A549 (cell line): ENCODE measurements at regions of chr20 and their contacts with region 1.

Region 1: DNA sequence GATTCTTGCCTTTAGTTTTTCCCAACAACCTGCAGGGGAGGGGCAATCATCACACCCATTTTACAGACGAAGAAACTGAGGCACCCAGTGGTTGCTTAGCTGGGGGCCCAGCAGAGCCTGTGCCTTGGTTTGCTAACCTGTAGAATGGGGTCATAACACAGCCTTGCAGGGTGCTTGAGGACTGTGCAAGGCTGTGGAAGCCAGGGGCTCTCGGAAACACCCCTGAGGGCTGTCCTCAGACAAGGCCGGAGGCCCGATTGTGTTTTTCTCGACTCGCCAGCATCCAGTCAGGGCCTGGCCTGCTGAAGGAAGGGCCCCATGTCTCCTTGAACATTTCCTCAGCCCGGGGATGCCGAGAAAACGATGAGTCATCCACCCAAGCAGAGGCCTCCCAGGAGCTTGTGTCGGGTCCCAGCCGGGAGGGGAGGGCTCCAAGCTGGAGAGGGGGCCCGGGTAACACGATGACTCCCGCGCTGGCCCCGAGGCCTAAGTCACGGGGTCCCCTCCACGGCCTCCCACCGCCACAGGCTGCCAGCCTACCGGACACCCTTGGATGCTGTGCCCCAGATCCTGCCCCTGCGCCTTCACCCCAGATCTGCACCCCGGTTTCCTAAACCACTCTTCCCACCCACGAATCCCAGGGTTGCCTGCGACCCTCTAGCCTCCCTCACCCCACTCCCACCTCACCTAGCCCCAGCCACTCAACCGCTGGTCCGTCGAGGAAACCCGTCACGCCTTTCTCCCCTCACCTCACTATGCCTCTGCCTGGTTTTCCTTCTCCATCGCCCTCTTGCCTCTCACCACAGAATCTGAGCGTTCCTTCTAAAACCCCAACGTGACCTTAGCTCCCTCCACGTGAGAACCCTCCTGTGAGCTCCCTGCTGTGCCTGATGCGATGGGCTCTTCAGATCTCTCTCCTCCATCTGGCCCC is 10.6 kb downstream of the NOL4L start:
- DNase-seq: peak; percentile 60 to 69
- ATAC-seq: peak; percentile 37 to 73; a peak in 4 of 6 replicates
- H3K4me3 ChIP-seq: no peak overlapping the region
- H3K27ac ChIP-seq: peak overlapping the region; percentile 65 to 84; a peak in 5 of 6 replicates
- H3K4me1 ChIP-seq: peaks cover 11% of the 10 kb centered on the region
- CTCF ChIP-seq: no peak
- EP300 ChIP-seq: no peak
- POLR2A ChIP-seq: no peak
- RAD21 ChIP-seq: no peak

Region 2: GRCh38 chr20:32558526-32558925 is 16.0 kb before region 1 on chr20:
- CTCF ChIA-PET with region 1: interaction called, 10 read pairs
- POLR2A ChIA-PET with region 1: no interaction called
- DNase-seq: no peak
- ATAC-seq: no peak
- H3K4me3 ChIP-seq: no peak overlapping the region
- H3K27ac ChIP-seq: no peak overlapping the region
- H3K4me1 ChIP-seq: peaks cover 14% of the 10 kb centered on the region
- CTCF ChIP-seq: no peak
- EP300 ChIP-seq: no peak
- POLR2A ChIP-seq: no peak
- RAD21 ChIP-seq: no peak